BJ (cell line): ENCODE measurements at regions of chr16 and their contacts with region 1.

Region 1: GRCh38 chr16:57906382-57907316 is 64.3 kb downstream of the CNGB1 start:
- DNase-seq: no peak
- H3K4me3 ChIP-seq: no peak overlapping the region
- H3K27me3 ChIP-seq: peaks cover 5% of the 10 kb centered on the region
- CTCF ChIP-seq: peak; percentile 78

Region 2: DNA sequence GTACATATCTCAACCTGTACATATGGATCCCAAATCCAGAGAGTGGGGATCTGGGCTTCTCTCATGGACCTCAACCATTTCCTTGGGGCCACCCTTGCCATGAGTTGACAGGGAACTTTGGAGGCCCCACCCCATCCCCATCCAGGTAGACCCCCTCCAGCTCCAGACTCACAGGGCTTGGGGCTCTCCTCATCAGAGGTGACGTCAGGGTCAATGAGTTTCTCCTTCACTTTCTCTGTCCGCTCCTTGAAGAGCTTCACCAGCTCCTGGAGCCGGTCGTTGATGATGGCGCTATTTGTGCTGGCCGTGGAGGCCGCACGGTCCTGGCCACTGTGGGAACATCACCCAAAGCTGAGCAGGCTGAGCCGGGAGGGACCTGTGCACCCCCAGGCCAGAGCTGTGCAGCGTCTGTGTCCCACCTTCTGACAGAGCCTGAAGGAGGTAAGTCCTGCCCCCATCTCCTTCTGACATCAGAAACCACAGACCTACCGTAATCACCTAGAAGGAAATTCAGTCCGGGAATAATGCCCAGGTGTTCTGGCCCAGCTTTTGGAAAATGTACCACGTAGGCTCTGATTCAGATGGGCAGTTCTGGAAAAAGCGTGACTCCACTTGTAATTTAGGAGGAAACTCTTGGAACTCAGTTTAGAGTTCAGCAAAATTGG is 13.7 kb after region 1 on chr16:
- CTCF ChIA-PET with region 1: interaction called, 16 read pairs
- POLR2A ChIA-PET with region 1: no interaction called
- DNase-seq: no peak
- H3K4me3 ChIP-seq: no peak overlapping the region
- H3K27me3 ChIP-seq: no peaks in the 10 kb centered on the region; the same call in 1 of the 2 replicates
- CTCF ChIP-seq: no peak

Region 3: DNA sequence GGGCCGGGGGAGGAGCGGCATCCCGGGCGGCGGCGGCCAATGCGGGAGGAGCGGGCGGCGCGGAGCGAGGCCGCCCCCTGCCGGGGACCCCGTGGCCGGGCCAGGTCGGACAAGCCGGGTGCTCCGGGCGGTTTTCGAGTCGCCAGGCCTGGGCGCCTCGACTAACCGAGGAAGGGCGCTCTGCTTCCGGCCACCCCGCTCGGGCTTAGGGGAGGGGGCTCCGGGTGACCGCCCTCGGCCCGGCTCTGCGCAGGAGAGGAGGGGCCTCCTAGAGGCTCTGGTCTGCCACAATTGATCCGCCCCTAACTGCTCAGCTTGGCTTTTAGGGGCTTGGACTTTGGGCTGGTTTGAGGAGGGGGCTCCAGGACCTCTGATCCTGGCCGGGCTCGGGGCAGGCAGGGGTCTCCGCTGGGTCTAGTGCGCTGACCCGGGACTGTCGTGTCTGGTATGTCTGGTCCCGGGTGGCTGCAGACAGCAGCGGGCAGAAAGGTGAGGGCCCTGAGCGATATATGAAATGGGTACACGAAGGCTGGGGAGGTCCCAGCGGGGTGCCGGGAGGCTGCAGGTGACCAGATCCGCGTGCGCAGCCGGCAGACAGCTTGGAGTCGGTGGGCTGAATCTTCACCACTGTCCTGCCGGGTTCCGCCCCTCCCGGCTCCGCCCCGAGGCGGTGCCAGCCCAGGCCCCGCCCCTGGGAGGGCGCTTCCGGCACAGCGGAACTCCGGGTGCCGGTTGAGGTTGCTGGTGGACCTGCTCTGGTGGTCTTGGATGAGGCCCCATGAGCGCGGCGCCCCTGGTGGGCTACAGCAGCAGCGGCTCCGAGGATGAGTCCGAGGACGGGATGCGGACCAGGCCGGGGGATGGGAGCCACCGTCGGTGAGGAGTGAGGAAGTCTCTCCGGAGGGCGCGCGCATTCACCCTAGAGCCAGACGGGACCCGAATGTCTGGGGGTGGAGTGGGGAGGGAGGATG is 94.3 kb after region 1 on chr16 and contains the start of gene USB1:
- CTCF ChIA-PET with region 1: interaction called, 63 read pairs
- POLR2A ChIA-PET with region 1: no interaction called
- DNase-seq: no peak
- H3K4me3 ChIP-seq: peak within 1 kb of the TSS; percentile 72
- H3K27me3 ChIP-seq: no peaks in the 10 kb centered on the region
- CTCF ChIP-seq: peak; percentile 48
- polyA plus RNA-seq, gene USB1: 48.7 and 86.2 TPM in 2 replicates

Region 4: DNA sequence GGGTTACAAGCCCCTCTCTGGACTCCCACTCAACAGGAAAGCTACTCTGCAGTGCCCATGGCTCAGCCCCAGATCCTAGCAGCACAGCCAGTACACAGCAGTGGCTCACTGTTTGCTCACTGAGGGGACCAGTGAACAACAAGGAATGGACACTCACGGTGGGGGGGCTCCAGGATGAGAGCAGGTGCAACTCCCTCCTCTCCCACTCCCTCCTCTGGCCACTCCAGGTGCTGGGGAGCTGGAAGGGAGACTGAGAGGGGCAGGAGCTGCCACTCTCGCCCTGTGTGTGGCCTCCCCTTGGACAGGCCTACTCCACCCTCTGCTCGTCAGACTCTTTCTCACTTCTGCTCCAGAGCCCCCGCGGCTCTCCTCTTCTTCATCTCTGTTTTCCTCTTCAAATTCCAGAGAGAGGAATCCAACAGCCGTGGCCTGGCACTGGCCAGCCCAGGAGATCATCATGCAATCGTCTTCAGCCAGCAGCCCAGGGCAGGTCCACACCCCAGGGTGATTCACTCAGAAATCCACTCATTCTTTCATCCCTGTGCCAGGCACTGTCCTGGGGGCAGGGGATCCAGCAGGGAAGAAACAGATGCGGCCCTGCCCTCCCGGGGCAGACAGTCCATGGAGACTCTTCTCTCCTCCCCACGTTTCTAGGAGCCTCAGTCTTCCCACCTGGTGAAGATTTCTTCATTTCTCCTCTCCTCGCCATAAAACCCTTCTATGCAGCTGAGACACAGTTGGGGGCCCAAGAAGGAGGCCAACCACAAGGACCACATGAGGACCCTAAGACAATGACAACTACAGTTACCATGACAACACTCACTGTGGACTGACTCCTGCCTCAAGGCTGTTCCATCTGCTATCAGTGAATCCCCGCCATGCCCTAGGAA is 191.8 kb after region 1 on chr16:
- CTCF ChIA-PET with region 1: no interaction called
- POLR2A ChIA-PET with region 1: no interaction called
- DNase-seq: peak; percentile 12
- H3K4me3 ChIP-seq: no peak overlapping the region
- H3K27me3 ChIP-seq: no peaks in the 10 kb centered on the region
- CTCF ChIP-seq: 0 out of 2 replicates have a peak, but pooled peaks have one; percentile 8